ENCODE measurements at regions of chr5 and their contacts with region 1.

Region 1: DNA sequence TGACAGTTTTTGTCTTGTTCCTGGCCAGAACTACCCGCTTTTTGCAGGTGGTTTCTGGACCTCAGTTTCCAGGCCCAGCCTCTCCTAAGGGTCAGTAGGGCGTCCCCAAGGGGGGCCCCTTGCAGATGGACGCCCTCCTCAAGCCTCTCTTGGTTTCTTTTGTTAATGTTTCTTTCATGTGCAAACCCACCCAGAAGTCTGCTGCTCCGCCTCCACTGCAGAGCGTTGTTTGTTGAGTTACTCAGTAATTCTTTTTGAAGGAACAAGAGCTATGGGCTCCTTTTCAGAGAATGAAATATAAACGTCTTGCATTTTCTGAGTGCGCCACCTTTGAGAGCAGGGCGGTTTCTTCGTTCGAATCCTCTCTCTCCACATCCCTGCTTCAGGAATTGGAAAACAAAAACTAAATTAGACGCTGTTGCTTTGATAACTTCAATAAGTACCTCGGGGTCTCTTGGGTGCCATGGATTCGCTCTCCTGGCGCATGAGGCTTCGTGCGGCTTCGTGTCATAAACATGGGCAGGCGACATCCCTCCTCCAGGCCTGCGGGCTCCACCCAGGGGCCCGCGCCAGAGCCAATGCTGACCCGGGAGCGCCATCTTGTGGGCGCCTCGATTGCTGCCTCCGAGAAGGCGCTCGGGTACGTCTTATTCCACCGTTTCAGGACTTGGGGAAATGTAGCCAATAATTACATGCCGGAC is 38.3 kb upstream of the CKMT2 start:
- DNase-seq: peak; percentile 68 to 77 (median 76)
- H3K4me3 ChIP-seq: no peak overlapping the region
- H3K4me3 Mint-ChIP-seq: peak overlapping the region in 7 of 8 donors; percentile 15 to 74 (median 48)
- H3K27ac ChIP-seq: no peak overlapping the region
- H3K27ac Mint-ChIP-seq: peak overlapping the region in 5 of 7 donors; percentile 64 to 87 (median 81)
- H3K4me1 ChIP-seq: peaks cover 8% of the 10 kb centered on the region
- H3K4me1 Mint-ChIP-seq: peaks cover 5 to 10% (median 8%) of the 10 kb centered on the region in 4 donors
- H3K27me3 ChIP-seq: no peaks in the 10 kb centered on the region
- H3K27me3 Mint-ChIP-seq: no peaks in the 10 kb centered on the region

Region 2: DNA sequence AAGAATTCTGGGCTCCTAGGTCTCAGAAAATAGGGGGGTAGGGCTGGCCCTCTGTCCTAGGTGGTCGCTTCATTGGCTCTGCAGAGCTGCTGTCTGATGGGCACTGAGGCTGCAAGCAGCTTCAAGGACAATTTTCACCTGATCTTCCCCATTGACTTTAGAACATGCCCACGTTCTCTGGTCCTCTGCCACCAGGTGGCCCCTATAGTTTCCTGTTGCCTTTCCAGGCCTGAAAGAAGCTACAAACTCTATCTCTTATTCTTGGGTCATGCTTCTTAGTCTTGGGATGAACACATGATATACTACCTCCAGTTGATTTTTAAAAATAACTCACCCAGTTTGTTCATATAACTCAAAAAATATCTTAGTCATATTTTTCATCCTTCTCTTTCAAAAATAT is 848.7 kb before region 1 on chr5:
- CTCF ChIA-PET with region 1: interaction called, 3 read pairs
- POLR2A ChIA-PET with region 1: no interaction called
- intact Hi-C with region 1: loop called (anchors 10 kb)
- DNase-seq: peak in 4 of 5 donors; percentile 18 to 29 (median 23)
- H3K4me3 ChIP-seq: no peak overlapping the region
- H3K4me3 Mint-ChIP-seq: no peak overlapping the region
- H3K27ac ChIP-seq: no peak overlapping the region
- H3K27ac Mint-ChIP-seq: no peak overlapping the region
- H3K4me1 ChIP-seq: no peaks in the 10 kb centered on the region
- H3K4me1 Mint-ChIP-seq: peaks cover 0 to 2% (median 0%) of the 10 kb centered on the region in 4 donors
- H3K27me3 ChIP-seq: no peaks in the 10 kb centered on the region
- H3K27me3 Mint-ChIP-seq: peaks cover 3 to 10% of the 10 kb centered on the region in 2 donors

Region 3: DNA sequence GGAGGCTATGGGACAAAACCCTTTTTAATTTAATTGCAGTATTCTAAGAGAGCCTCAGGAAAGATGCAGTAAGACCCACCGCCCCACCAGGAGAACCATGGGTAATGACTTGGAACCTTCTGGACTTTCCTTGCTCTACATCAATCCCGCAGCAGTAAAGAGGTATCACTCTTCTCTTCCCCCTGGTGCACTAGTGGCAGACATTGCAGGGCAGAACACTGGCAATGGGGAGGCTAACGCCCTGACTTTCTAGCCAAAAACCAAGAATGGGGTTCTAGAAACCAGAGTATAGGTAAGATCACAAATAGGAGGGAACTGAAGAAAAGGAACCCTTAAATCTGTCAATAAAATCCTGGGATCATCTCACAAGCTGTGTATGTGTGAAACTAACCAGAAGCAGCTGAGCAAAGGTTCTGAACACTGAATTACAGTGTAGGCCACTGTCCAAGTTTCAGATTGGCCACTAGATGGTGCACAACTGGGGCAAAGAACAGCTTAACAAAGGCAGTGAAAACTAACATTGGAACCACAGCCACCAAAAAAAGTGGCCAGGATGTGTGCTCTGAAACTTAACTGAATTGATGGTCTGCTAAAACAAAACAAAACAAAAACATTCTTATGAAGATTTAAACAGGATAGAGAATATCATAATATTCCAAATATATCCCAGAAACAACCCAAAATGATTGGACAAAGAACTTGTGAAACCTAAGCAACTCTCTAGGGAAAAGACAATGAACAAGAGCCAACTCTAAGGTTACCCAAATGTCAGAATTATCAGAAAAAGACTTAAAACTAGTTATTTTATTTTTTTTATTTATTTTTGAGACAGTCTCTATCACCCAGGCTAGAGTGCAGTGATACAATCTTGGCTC is 713.5 kb before region 1 on chr5:
- CTCF ChIA-PET with region 1: no interaction called
- POLR2A ChIA-PET with region 1: no interaction called
- intact Hi-C with region 1: loop called (anchors 1 kb)
- DNase-seq: peak in 4 of 5 donors; percentile 16 to 31 (median 23)
- H3K4me3 ChIP-seq: no peak overlapping the region
- H3K4me3 Mint-ChIP-seq: no peak overlapping the region
- H3K27ac ChIP-seq: no peak overlapping the region
- H3K27ac Mint-ChIP-seq: no peak overlapping the region
- H3K4me1 ChIP-seq: no peaks in the 10 kb centered on the region
- H3K4me1 Mint-ChIP-seq: peaks cover 0 to under 1% (median under 1%) of the 10 kb centered on the region in 4 donors
- H3K27me3 ChIP-seq: no peaks in the 10 kb centered on the region
- H3K27me3 Mint-ChIP-seq: no peaks in the 10 kb centered on the region

Region 4: DNA sequence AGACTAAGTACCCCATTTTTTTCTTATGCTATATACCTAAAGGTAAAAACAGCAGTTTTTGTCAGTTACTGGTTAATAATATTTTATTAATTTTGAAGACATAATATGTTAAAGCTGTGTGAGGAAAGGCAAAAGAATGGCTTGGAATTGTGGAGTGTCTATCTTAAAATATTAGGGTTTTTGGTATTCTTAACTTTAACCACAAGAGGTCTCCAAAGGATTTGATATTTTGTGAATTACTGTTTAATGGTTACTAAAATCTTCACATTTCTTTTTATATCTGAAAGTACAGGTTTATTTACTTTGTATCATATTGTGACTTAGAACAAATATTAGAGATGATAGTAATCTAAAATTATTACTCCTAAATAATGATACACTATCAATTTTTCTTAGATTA is 508.0 kb before region 1 on chr5:
- CTCF ChIA-PET with region 1: interaction called, 34 read pairs
- POLR2A ChIA-PET with region 1: interaction called, 3 read pairs
- intact Hi-C with region 1: loop called (anchors 1 kb)
- DNase-seq: peak in 4 of 5 donors; percentile 32 to 41 (median 37)
- H3K4me3 ChIP-seq: no peak overlapping the region
- H3K4me3 Mint-ChIP-seq: no peak overlapping the region
- H3K27ac ChIP-seq: no peak overlapping the region
- H3K27ac Mint-ChIP-seq: no peak overlapping the region
- H3K4me1 ChIP-seq: peaks cover 5% of the 10 kb centered on the region
- H3K4me1 Mint-ChIP-seq: peaks cover 13 to 28% (median 19%) of the 10 kb centered on the region in 4 donors
- H3K27me3 ChIP-seq: no peaks in the 10 kb centered on the region
- H3K27me3 Mint-ChIP-seq: no peaks in the 10 kb centered on the region

Region 5: GRCh38 chr5:80935811-80936385 is 258.9 kb before region 1 on chr5:
- CTCF ChIA-PET with region 1: no interaction called
- POLR2A ChIA-PET with region 1: no interaction called
- intact Hi-C with region 1: loop called (anchors 10 kb)
- DNase-seq: no peak
- H3K4me3 ChIP-seq: no peak overlapping the region
- H3K4me3 Mint-ChIP-seq: no peak overlapping the region
- H3K27ac ChIP-seq: no peak overlapping the region
- H3K27ac Mint-ChIP-seq: no peak overlapping the region
- H3K4me1 ChIP-seq: no peaks in the 10 kb centered on the region
- H3K4me1 Mint-ChIP-seq: peaks cover 2 to 11% (median 7%) of the 10 kb centered on the region in 4 donors
- H3K27me3 ChIP-seq: no peaks in the 10 kb centered on the region
- H3K27me3 Mint-ChIP-seq: no peaks in the 10 kb centered on the region

Region 6: GRCh38 chr5:81207009-81207408 is 12.2 kb after region 1 on chr5:
- CTCF ChIA-PET with region 1: interaction called, 30 read pairs
- POLR2A ChIA-PET with region 1: no interaction called
- intact Hi-C with region 1: no loop called
- DNase-seq: no peak
- H3K4me3 ChIP-seq: no peak overlapping the region
- H3K4me3 Mint-ChIP-seq: no peak overlapping the region
- H3K27ac ChIP-seq: no peak overlapping the region
- H3K27ac Mint-ChIP-seq: no peak overlapping the region
- H3K4me1 ChIP-seq: no peaks in the 10 kb centered on the region
- H3K4me1 Mint-ChIP-seq: no peaks in the 10 kb centered on the region
- H3K27me3 ChIP-seq: no peaks in the 10 kb centered on the region
- H3K27me3 Mint-ChIP-seq: no peaks in the 10 kb centered on the region